Mammary epithelial cell (primary cell): ENCODE measurements at regions of chr5 and their contacts with region 1.

Region 1: DNA sequence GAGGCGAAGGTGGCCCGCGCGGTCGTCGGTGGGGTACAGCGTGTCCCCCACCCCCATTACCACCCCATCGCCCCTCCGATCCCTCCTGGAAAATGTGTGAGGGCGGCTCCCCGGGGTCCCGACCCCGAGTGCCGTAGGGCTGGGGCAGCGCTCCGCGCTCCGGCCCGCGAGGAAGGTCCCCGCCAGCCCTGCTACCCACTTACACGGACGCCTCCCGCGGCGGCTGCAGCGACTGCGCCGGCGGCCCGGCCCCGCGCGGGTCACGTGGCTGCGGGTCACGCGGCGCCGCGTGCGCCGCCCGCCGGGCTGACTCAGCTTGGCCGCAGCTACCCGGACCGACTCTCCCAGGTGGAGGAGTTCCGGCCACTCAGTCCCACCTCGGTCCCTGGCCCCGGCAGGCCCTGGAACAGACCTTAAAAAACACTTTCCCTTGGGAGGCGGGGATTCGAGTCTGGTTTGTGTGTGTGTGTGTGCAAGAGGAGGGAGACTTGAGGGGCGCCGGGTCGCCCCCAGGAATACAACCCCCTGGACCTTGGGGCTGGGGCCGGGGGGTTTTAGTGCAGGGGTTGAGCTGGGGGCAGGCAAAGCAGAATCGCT is at the start of gene GNPDA1:
- DNase-seq: peak; percentile 71
- H3K4me3 ChIP-seq: peak within 1 kb of the TSS; percentile 69 to 84 (median 69)
- H3K27ac ChIP-seq: peak within 1 kb of the TSS; percentile 53
- H3K4me1 ChIP-seq: peaks cover 31% of the 10 kb centered on the region
- H3K27me3 ChIP-seq: no peaks in the 10 kb centered on the region
- CTCF ChIP-seq: no peak
- total RNA-seq, gene GNPDA1: 29.0 to 77.2 TPM

Region 2: DNA sequence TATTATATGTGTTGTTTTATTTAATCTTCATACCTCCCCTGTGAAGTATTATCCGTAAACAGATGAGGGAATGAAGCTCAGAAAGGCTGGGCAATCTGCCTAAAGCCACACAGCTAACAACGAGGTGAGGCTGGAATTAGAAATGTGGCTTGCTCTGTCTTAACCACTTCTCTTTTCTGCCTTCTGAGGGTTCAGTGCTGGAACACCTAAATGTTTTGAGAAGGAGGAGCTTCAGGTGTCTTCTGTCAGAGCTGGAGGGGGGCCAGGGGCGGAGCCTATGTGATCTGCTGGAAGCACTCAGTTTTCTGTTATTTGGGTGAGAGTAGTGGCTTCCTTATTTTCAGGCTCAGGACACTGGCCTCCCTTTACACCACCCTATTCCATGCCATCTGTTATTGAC is 295.8 kb before region 1 on chr5:
- CTCF ChIA-PET with region 1: no interaction called
- dilution Hi-C with region 1: no loop called
- in situ Hi-C with region 1: no loop called
- intact Hi-C with region 1: no loop called
- DNase-seq: no peak
- H3K4me3 ChIP-seq: no peak overlapping the region
- H3K27ac ChIP-seq: no peak overlapping the region
- H3K4me1 ChIP-seq: peaks cover 50% of the 10 kb centered on the region
- H3K27me3 ChIP-seq: no peaks in the 10 kb centered on the region
- CTCF ChIP-seq: no peak

Region 3: DNA sequence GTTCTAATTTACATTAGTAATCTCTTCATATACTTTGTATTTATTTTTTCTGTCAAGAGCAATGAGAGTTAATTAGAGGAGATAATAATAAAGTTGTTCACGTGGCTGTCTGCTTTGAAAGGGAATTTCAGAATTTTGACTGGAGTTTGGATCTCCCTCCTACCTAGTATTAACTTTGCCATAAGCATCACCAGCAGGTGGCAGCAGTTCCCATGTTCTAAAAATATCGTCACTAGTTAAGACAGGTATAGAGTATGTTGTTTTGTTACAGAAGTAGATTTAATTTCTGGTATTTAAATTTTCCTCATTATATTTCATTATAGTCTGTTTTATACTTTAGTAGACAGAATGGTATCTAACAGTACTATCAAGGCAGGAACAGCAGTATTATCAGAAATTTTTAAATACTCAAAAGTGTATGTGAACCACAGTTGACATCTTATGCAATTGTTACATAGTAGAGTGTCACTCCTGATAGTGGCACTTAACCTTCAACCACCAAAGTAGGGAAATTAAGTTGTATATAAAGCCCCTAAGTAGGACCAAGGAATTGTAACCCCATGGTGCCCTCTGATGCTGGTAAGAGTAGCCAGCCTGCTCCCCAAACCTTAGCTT is 20.4 kb before region 1 on chr5:
- CTCF ChIA-PET with region 1: interaction called, 11 read pairs
- dilution Hi-C with region 1: no loop called
- in situ Hi-C with region 1: no loop called
- intact Hi-C with region 1: loop called (anchors 1 kb)
- DNase-seq: peak; percentile 49
- H3K4me3 ChIP-seq: no peak overlapping the region
- H3K27ac ChIP-seq: no peak overlapping the region
- H3K4me1 ChIP-seq: no peaks in the 10 kb centered on the region
- H3K27me3 ChIP-seq: no peaks in the 10 kb centered on the region
- CTCF ChIP-seq: peak; percentile 60 to 67

Region 4: GRCh38 chr5:142057697-142058056 is 44.8 kb after region 1 on chr5:
- CTCF ChIA-PET with region 1: no interaction called
- dilution Hi-C with region 1: no loop called
- in situ Hi-C with region 1: no loop called
- intact Hi-C with region 1: loop called (anchors 1 kb)
- DNase-seq: peak; percentile 78
- H3K4me3 ChIP-seq: no peak overlapping the region
- H3K27ac ChIP-seq: peak overlapping the region; percentile 83
- H3K4me1 ChIP-seq: peaks cover 31% of the 10 kb centered on the region
- H3K27me3 ChIP-seq: no peaks in the 10 kb centered on the region
- CTCF ChIP-seq: no peak

Region 5: DNA sequence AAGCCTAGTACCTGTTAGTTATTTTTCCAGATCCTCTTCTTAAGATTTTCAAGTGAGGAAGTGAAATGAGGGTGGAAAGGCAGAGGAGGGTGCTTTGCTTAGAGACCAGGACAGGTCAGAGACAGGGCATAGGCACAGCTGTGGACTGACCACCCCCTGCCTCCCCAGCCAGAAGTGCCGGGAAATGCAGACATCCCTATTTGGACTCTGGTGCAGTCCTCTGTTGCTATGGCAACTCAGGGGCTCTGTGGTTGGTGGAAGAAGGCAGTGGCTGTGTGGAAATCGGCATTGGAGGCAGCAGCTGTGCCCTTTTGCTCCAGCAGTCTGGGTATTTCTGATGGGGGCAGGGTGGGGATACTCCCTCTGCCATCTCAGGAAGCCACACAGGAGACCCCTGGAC is 52.4 kb after region 1 on chr5:
- CTCF ChIA-PET with region 1: no interaction called
- dilution Hi-C with region 1: loop called (anchors 5 kb)
- in situ Hi-C with region 1: no loop called
- intact Hi-C with region 1: no loop called
- DNase-seq: no peak
- H3K4me3 ChIP-seq: no peak overlapping the region
- H3K27ac ChIP-seq: no peak overlapping the region
- H3K4me1 ChIP-seq: no peaks in the 10 kb centered on the region
- H3K27me3 ChIP-seq: no peaks in the 10 kb centered on the region
- CTCF ChIP-seq: no peak

Region 6: GRCh38 chr5:142108432-142109330 is 95.8 kb after region 1 on chr5 and contains the start of gene NDFIP1:
- CTCF ChIA-PET with region 1: no interaction called
- dilution Hi-C with region 1: no loop called
- in situ Hi-C with region 1: no loop called
- intact Hi-C with region 1: loop called (anchors 1 kb)
- DNase-seq: peak; percentile 83
- H3K4me3 ChIP-seq: peak within 1 kb of the TSS; percentile 74 to 84 (median 78)
- H3K27ac ChIP-seq: peak within 1 kb of the TSS; percentile 80
- H3K4me1 ChIP-seq: peaks cover 14% of the 10 kb centered on the region
- H3K27me3 ChIP-seq: no peaks in the 10 kb centered on the region
- CTCF ChIP-seq: no peak
- total RNA-seq, gene NDFIP1: 40.4 to 120 TPM